Activated T-helper 2 cell treated with anti-CD3 and anti-CD28 coated beads, Interferon-gamma antibody, Interleukin-2, Interleukin-4, amounts not matched to agents 10 μg/mL and 5 μg/mL and 100 μg/mL, durations not matched to agents 14 hours and 24 hours and 36 hours (primary cell): ENCODE measurements at regions of chr1 and their contacts with region 1.

Region 1: DNA sequence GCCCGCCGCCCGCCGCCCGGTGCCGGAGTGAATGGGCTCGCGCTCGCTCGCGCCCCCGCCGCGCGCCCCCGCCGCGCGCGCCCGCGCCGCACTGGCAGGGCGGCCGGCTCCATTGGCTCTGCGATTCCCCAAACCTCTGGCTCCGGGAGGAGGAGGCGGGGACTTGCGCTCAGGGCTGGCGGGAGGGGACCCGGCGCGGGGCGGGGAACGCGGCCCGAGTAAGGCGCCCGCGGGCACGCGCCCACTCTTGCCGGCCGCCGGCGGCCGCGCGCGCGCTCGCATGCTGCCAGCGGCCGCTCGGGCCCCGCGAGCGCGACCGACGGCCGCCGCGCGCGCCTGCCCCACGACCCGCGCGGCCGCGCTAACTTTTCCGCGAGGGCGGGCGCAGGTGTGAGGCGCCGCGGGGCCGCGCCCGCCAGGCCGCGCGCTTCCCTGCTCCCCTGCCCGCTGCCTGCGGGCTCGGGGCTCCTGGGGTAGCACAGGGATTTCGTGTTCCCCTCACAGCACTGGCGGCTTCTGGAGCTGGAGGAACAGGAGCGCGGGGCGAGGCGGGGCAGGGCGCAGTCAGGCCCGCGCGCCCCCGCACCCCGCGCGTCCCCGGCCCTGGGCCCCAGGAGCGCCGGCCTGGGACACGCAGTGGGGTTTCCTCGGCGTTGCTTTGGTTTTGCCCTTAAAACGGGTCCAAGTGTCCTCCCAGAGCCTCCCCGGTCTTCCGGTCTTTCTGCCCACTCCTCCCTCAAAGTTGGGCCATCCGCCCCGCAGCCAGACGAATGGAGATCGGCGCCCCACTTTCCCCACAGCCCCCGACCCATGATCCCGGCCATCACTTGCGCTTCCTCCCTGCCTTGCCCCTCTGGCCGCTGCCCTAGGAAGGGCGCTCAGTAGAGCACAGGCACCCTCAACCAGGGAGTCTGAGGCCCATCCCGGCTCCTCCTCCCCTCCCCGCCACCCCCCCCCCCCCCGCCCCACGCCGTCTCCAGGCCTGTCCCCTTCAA is 101.5 kb downstream of the CASZ1 start:
- DNase-seq: peak; percentile 76
- H3K4me3 Mint-ChIP-seq: peak overlapping the region; percentile 71
- H3K27ac Mint-ChIP-seq: no peak overlapping the region
- H3K4me1 Mint-ChIP-seq: peaks cover 31% of the 10 kb centered on the region
- H3K27me3 Mint-ChIP-seq: peaks cover 15% of the 10 kb centered on the region

Region 2: GRCh38 chr1:9823943-9824701 is 870.8 kb before region 1 on chr1 and contains the start of gene CLSTN1:
- intact Hi-C with region 1: loop called (anchors 10 kb)
- DNase-seq: peak; percentile 84
- H3K4me3 Mint-ChIP-seq: peak within 1 kb of the TSS; percentile 90
- H3K27ac Mint-ChIP-seq: peak within 1 kb of the TSS; percentile 73
- H3K4me1 Mint-ChIP-seq: peaks cover 31% of the 10 kb centered on the region
- H3K27me3 Mint-ChIP-seq: peaks cover 15% of the 10 kb centered on the region
- total RNA-seq, gene CLSTN1: 46.5 and 48.8 TPM in 2 replicates

Region 3: GRCh38 chr1:10606070-10606469 is 88.9 kb before region 1 on chr1:
- intact Hi-C with region 1: no loop called
- DNase-seq: no peak
- H3K4me3 Mint-ChIP-seq: no peak overlapping the region
- H3K27ac Mint-ChIP-seq: no peak overlapping the region
- H3K4me1 Mint-ChIP-seq: no peaks in the 10 kb centered on the region
- H3K27me3 Mint-ChIP-seq: no peaks in the 10 kb centered on the region

Region 4: GRCh38 chr1:10796019-10796944 is 101.4 kb after region 1 on chr1 and contains the start of gene CASZ1:
- intact Hi-C with region 1: loop called (anchors 5 kb)
- DNase-seq: no peak
- H3K4me3 Mint-ChIP-seq: peak within 1 kb of the TSS; percentile 75
- H3K27ac Mint-ChIP-seq: no peak within 1 kb of the TSS
- H3K4me1 Mint-ChIP-seq: peaks cover 9% of the 10 kb centered on the region
- H3K27me3 Mint-ChIP-seq: peaks cover 66% of the 10 kb centered on the region
- total RNA-seq, gene CASZ1: 8.6 and 9.9 TPM in 2 replicates

Region 5: DNA sequence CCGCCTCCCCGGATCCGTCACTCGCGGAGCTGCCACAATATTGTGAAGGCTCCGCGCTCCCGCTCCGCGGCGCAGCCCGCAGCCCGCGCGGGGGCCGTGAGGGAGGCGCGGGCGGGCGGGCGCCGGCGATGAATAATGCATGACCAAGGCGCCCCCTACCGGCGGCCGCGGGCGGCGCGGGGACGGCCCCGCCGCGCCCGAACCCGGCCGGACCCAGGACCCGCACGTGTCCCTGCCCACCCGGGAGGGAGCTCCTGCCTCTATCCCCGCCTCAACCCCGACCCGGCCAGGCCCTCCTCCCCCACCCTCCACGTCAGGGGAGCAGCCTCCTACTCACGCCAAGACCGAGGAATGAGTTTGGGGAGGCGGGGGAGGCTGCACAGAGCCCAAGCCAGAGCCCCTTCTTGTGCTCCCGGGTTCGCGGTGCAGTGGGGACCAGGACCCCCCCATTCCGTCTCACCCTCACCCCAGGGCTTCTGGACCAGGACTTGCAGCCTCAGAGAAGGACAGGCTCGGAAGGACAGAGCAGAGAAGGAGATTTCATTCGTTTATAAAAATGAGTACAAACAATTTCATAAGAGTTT is 172.3 kb after region 1 on chr1:
- intact Hi-C with region 1: loop called (anchors 2 kb)
- DNase-seq: peak; percentile 50
- H3K4me3 Mint-ChIP-seq: peak overlapping the region; percentile 52
- H3K27ac Mint-ChIP-seq: no peak overlapping the region
- H3K4me1 Mint-ChIP-seq: peaks cover 15% of the 10 kb centered on the region
- H3K27me3 Mint-ChIP-seq: peaks cover 69% of the 10 kb centered on the region

Region 6: DNA sequence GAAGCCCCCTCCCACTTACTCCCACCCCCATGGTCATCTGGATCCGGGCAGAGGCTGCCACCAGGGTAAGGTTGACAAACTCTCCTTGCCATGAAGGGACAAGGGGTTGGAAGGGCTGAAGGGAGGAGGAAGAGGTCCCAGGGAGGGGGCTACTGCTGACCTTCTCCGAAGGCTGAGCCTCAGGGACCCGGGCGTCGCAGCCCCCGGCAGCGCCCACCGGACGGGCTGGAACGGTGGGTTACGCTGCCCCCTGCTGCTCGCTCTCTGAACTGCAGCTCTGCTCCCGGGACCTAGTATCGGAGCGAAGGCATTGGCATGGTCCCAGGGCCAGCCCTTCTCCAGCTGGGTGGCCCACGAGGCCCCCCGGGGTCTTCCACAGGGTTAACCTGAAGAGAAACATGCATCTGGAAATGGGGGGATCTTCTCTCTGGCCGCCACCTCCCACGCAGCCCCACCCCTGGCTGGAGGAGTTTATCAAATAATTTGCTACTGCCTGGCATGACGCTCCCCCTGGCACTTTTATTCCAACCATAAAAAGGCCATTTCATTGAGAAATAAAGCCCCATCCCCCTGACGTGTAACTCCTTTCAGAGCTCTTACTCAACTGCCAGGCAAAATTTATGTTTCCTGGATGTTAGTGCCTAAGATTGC is 247.1 kb after region 1 on chr1:
- intact Hi-C with region 1: loop called (anchors 2 kb)
- DNase-seq: peak; percentile 40
- H3K4me3 Mint-ChIP-seq: no peak overlapping the region
- H3K27ac Mint-ChIP-seq: no peak overlapping the region
- H3K4me1 Mint-ChIP-seq: peaks cover 27% of the 10 kb centered on the region
- H3K27me3 Mint-ChIP-seq: peaks cover 62% of the 10 kb centered on the region